ENCODE measurements at regions of chr20 and their contacts with region 1.

Region 1: DNA sequence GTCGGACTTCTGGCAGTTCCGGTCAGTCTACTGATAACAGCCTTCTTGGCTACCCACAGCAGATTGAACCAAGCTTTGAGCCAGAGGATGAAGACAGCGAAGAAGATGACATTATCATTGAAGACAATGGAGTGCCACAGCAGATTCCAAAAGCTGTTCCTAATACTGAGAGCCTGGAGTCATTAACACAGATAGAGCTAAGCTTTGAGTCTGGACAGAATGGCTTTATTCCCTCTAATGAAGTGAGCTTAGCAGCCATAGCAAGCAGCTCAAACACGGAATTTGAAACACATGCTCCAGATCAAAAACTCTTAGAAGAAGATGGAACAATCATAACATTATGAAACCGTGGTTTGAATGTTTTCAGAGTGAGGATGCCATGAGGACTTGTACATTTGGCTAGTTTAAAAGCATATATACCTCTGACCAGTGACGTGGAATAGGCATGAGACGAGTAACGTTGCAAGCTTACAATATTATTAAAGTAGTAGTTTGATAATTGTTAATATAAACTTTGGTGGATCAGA is 18.8 kb downstream of the PARD6B start:
- DNase-seq: no peak
- ATAC-seq: no peak
- H3K4me3 ChIP-seq: no peak overlapping the region
- H3K27ac ChIP-seq: no peak overlapping the region
- H3K4me1 ChIP-seq: peaks cover 6% of the 10 kb centered on the region; the same call in 1 of the 2 replicates
- H3K27me3 ChIP-seq: no peaks in the 10 kb centered on the region
- CTCF ChIP-seq: no peak
- EP300 ChIP-seq: no peak
- POLR2A ChIP-seq: no peak
- RAD21 ChIP-seq: no peak

Region 2: DNA sequence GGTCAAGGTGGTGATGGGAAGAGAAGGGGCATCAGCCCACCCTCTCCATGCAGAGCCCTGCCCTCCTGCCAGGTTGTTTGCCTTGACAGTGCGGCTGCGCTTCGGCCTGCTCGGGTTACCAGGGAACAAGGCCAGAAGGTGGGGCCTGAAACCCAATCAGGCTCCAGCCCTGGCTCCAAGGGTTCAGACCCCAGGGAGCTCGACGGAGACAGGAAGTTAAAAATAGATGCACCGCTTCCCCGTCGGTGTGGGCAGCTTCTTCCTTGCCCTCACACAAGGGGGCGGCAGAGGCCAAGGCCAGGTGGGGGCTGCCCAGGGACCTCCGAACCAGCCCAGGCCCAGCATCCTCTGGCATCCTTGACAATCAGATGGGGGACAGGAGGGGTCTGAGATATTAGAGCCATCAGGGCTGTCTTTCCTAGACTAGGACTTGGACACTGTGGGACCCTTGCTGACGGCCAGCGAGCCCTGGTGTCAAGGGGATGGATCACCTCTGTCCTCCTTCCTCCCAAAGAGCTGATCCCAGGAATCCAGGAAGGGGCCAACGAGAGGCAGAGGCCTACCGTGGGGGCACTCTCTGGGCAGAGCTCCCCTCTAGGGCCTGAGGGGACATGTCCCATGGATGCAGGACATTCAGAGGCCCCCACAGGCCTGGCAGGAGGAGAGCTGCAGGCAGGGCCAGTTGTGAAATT is 124.1 kb before region 1 on chr20:
- CTCF ChIA-PET with region 1: interaction called, 18 read pairs
- POLR2A ChIA-PET with region 1: no interaction called
- RAD21 ChIA-PET with region 1: interaction called, 12 read pairs
- SMC1A ChIA-PET with region 1: interaction called, 9 read pairs
- in situ Hi-C with region 1: no loop called
- intact Hi-C with region 1: loop called (anchors 10 kb)
- DNase-seq: no peak
- ATAC-seq: peak; percentile 73
- H3K4me3 ChIP-seq: no peak overlapping the region
- H3K27ac ChIP-seq: no peak overlapping the region
- H3K4me1 ChIP-seq: no peaks in the 10 kb centered on the region
- H3K27me3 ChIP-seq: no peaks in the 10 kb centered on the region; a peak in 2 of 4 replicates
- CTCF ChIP-seq: peak; percentile 37 to 54 (median 44)
- EP300 ChIP-seq: no peak
- POLR2A ChIP-seq: no peak
- RAD21 ChIP-seq: peak; percentile 51

Region 3: GRCh38 chr20:50731055-50731871 is 18.9 kb before region 1 on chr20 and contains the start of gene PARD6B:
- CTCF ChIA-PET with region 1: interaction called, 21 read pairs
- POLR2A ChIA-PET with region 1: no interaction called
- RAD21 ChIA-PET with region 1: interaction called, 3 read pairs
- SMC1A ChIA-PET with region 1: interaction called, 4 read pairs
- in situ Hi-C with region 1: no loop called
- intact Hi-C with region 1: no loop called
- DNase-seq: peak; percentile 97
- ATAC-seq: peak; percentile 94
- H3K4me3 ChIP-seq: peak within 1 kb of the TSS; percentile 83
- H3K27ac ChIP-seq: peak within 1 kb of the TSS; percentile 39
- H3K4me1 ChIP-seq: peaks cover 12% of the 10 kb centered on the region; the same call in 1 of the 2 replicates
- H3K27me3 ChIP-seq: no peaks in the 10 kb centered on the region
- CTCF ChIP-seq: no peak
- EP300 ChIP-seq: no peak
- POLR2A ChIP-seq: peak; percentile 79
- RAD21 ChIP-seq: no peak
- polyA plus RNA-seq, gene PARD6B: 0.57 to 1.9 TPM

Region 4: DNA sequence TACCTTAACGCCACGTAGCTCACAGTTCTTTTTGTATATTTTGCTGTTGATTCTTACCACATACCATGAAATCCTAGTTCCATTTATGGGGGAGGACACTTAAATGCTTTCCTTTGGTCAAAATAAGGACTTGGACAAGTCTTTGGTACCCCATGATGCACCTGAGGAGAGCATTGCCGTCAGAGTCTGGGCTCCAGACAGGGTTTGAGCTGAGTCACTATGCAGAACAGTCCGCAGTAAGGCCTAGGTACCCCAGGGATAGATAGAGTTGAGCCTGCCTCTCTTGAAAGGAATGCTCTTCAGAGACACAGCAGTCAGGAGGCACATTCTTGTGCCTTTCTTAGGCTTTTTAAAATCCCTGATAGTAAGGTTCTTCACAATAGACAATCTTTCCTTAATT is 12.9 kb before region 1 on chr20:
- CTCF ChIA-PET with region 1: interaction called, 21 read pairs
- POLR2A ChIA-PET with region 1: no interaction called
- RAD21 ChIA-PET with region 1: interaction called, 3 read pairs
- SMC1A ChIA-PET with region 1: interaction called, 5 read pairs
- in situ Hi-C with region 1: no loop called
- intact Hi-C with region 1: no loop called
- DNase-seq: no peak
- ATAC-seq: no peak
- H3K4me3 ChIP-seq: no peak overlapping the region
- H3K27ac ChIP-seq: no peak overlapping the region
- H3K4me1 ChIP-seq: no peaks in the 10 kb centered on the region
- H3K27me3 ChIP-seq: no peaks in the 10 kb centered on the region
- CTCF ChIP-seq: no peak
- EP300 ChIP-seq: no peak
- POLR2A ChIP-seq: no peak
- RAD21 ChIP-seq: no peak